ENCODE measurements at regions of chr16 and their contacts with region 1.

Region 1: GRCh38 chr16:28193530-28194423 is 18.0 kb downstream of the XPO6 start:
- DNase-seq: peak in 4 of 10 donors; percentile 13 to 36 (median 31)
- ATAC-seq: peak; percentile 3 to 4
- H3K4me3 Mint-ChIP-seq: peak overlapping the region; percentile 57 to 88 (median 84)
- H3K27ac Mint-ChIP-seq: peak overlapping the region; percentile 95 to 100 (median 98)
- H3K4me1 Mint-ChIP-seq: peaks cover 42 to 89% (median 82%) of the 10 kb centered on the region in 4 donors
- H3K27me3 Mint-ChIP-seq: no peaks in the 10 kb centered on the region

Region 2: DNA sequence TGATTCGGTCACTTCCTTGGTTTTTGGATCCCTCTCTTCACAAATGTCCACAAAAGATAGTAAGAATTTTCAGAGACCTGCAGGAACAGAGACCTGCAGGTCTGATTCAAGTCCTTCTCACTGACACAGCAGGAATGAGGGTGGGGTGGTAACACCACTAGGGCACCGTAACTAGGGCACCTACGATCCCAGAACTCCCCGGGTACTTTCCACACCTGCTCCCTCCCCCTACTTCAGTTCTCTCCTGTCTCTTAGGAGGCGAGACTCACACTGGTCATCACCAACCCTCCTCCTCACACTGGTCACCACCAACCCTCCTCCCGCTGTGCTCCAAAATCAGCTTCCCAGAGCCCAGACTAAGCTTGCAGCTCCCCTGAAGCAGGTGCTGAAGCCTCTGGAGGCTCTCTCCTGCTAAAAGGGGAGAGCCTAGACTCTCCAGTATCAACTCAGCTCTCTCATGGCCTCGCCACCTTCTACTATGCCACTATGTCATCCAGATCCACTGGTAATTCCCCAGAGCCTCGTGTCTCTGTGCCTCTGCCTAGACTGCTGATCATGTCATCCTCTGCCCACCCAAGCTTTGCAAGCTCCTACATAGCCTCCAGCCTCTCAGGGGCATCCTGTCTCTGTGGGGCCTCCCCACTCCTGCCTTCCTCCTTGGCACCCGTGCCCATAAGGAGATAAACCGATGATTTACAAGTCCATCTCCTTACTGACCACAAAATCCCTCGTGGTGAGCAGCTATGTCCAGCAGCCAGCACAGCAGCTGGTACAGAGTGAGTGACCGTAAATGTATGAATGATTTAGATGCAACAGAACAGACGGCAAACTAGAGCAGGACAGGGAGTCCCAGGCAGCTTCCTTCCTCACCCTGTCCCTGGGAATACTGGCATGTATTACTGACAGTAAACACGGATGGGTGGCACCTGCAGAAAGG is 66.8 kb before region 1 on chr16:
- POLR2A ChIA-PET with region 1: no interaction called
- DNase-seq: no peak
- ATAC-seq: no peak
- H3K4me3 Mint-ChIP-seq: peak overlapping the region in 1 of 10 donors; percentile 63
- H3K27ac Mint-ChIP-seq: peak overlapping the region in 9 of 10 donors; percentile 36 to 90 (median 78)
- H3K4me1 Mint-ChIP-seq: peaks cover 0 to 39% (median 20%) of the 10 kb centered on the region in 4 donors
- H3K27me3 Mint-ChIP-seq: no peaks in the 10 kb centered on the region

Region 3: DNA sequence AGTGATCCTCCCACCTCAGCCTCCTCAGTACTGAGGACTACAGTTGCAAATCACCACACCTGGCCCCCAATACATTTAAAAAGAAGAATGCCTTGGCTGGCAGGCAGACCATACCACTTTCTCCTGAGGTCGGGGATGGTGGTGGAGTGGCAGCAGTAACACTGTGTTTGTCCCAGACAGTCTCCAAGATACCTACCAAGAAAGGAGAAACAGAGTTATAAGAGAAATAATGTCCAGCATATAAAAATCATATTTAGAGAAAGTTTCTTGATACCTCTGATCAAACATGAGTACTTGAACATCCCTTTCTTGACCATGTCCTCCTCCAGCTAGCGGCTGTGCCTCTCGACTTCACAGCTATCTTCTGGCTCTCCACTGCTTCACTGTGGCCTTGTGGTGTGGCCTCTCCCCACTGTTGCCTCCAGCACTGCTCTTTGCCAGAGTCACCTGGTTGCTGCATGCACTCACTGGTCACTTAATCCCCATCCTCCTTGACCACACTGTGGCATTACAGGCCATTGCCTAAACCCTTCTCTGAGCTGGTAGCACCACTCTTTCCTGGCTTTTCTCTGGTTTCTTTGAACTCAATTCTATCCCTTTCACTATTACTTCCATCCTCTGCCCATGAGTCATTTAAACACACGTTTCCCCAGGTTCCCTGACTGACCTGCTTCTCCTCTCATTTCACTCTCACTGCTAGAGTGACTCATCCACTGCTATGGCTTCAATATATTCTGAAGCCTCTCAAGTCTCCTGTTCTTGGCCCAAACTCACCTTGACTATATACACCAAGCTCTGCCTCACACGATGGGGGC is 27.2 kb before region 1 on chr16:
- POLR2A ChIA-PET with region 1: interaction called, 21 read pairs
- DNase-seq: no peak
- ATAC-seq: no peak
- H3K4me3 Mint-ChIP-seq: peak overlapping the region in 9 of 10 donors; percentile 6 to 73 (median 49)
- H3K27ac Mint-ChIP-seq: peak overlapping the region; percentile 86 to 93 (median 91)
- H3K4me1 Mint-ChIP-seq: peaks cover 37 to 88% (median 79%) of the 10 kb centered on the region in 4 donors
- H3K27me3 Mint-ChIP-seq: no peaks in the 10 kb centered on the region